Activated T-helper 1 cell treated with anti-CD3 and anti-CD28 coated beads, Interleukin-12 subunit alpha, Interleukin-12 subunit beta, Interleukin-2, Interleukin-4 antibody, amounts not matched to agents 30 ng/mL and 10 ng/mL and 1 ng/mL, durations not matched to agents 14 hours and 24 hours and 36 hours (primary cell): ENCODE measurements at regions of chr9 and their contacts with region 1.

Region 1: DNA sequence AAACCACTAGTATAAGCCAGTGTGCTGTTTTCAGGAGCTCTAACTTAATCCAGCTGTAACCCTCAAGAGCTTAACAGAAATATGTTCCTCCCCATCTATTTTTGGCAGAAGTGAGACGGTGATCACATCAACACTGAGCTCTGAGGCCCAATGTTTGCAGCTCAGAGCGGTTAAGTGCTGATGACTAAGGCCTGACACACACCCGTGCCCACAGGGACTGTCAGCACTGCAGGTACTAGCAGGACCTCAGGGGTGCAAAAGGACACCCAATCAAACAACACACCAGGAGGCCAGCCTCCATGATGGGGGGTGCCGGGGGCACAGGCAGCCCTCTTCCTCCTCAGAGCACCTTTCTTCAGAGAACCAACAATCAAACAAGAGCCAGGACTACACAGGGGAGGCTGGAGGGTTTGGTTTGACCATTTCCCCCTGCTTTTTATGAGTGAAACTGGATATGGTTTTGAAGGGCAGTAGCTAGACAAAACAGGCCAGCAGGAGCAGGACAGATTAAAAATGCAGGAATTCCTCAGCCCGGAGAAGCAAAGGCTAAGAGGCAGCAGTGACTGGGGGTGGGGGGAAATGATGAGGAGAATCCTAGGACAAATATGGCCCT is 61.3 kb downstream of the RAPGEF1 start:
- DNase-seq: peak; percentile 76
- H3K4me3 Mint-ChIP-seq: peak overlapping the region; percentile 84
- H3K27ac Mint-ChIP-seq: peak overlapping the region; percentile 99
- H3K4me1 Mint-ChIP-seq: peaks cover 92% of the 10 kb centered on the region
- H3K27me3 Mint-ChIP-seq: no peaks in the 10 kb centered on the region

Region 2: GRCh38 chr9:131635285-131635684 is 43.3 kb before region 1 on chr9:
- intact Hi-C with region 1: loop called (anchors 1 kb)
- DNase-seq: peak; percentile 74
- H3K4me3 Mint-ChIP-seq: peak overlapping the region; percentile 33
- H3K27ac Mint-ChIP-seq: peak overlapping the region; percentile 85
- H3K4me1 Mint-ChIP-seq: peaks cover 78% of the 10 kb centered on the region
- H3K27me3 Mint-ChIP-seq: peaks cover 2% of the 10 kb centered on the region

Region 3: GRCh38 chr9:131657890-131658752 is 20.5 kb before region 1 on chr9:
- intact Hi-C with region 1: loop called (anchors 1 kb)
- DNase-seq: no peak
- H3K4me3 Mint-ChIP-seq: peak overlapping the region; percentile 73
- H3K27ac Mint-ChIP-seq: peak overlapping the region; percentile 100
- H3K4me1 Mint-ChIP-seq: peaks cover 91% of the 10 kb centered on the region
- H3K27me3 Mint-ChIP-seq: no peaks in the 10 kb centered on the region

Region 4: GRCh38 chr9:131692612-131693562 is 14.3 kb after region 1 on chr9:
- intact Hi-C with region 1: loop called (anchors 2 kb)
- DNase-seq: no peak
- H3K4me3 Mint-ChIP-seq: no peak overlapping the region
- H3K27ac Mint-ChIP-seq: no peak overlapping the region
- H3K4me1 Mint-ChIP-seq: peaks cover 82% of the 10 kb centered on the region
- H3K27me3 Mint-ChIP-seq: no peaks in the 10 kb centered on the region

Region 5: DNA sequence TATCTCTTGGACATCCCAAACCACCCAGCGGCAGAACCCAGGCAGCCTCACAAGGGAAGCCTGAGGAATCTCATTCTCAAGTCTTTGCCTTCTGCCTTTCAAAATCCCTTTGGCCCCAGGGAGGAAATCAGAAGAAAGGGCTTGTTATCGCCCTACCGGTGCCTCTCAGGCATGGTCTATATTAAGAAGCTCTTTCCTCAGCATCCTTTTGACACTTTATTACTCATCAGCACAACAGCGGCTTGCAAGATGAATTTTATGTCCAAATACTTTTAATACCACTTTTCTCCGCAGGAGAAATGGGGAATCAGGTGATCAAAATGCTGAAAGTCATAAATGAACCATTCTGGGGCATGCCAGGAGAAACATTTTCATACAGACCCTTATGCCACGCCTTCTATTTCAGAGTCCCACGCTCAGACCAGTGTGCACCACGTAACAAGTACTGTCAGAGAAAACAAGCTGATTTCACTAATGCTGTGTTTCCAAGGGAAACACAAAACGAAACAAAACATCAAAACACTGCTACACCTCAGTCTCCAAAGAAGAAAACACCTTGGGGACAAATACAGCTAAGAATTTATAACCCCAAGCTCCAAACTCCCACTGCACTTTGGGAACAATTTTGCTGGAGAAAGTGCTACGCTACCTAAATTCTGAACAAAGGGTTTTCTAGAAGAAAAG is 31.3 kb after region 1 on chr9:
- intact Hi-C with region 1: loop called (anchors 1 kb)
- DNase-seq: peak; percentile 44
- H3K4me3 Mint-ChIP-seq: peak overlapping the region; percentile 69
- H3K27ac Mint-ChIP-seq: peak overlapping the region; percentile 97
- H3K4me1 Mint-ChIP-seq: peaks cover 76% of the 10 kb centered on the region
- H3K27me3 Mint-ChIP-seq: no peaks in the 10 kb centered on the region